A673 (cell line): ENCODE measurements at regions of chr1 and their contacts with region 1.

Region 1: GRCh38 chr1:10779201-10779600 is 17.2 kb downstream of the CASZ1 start:
- DNase-seq: peak; percentile 66
- H3K4me3 ChIP-seq: no peak overlapping the region
- H3K27ac ChIP-seq: no peak overlapping the region
- H3K4me1 ChIP-seq: peaks cover 8% of the 10 kb centered on the region
- H3K27me3 ChIP-seq: no peaks in the 10 kb centered on the region
- CTCF ChIP-seq: no peak

Region 2: DNA sequence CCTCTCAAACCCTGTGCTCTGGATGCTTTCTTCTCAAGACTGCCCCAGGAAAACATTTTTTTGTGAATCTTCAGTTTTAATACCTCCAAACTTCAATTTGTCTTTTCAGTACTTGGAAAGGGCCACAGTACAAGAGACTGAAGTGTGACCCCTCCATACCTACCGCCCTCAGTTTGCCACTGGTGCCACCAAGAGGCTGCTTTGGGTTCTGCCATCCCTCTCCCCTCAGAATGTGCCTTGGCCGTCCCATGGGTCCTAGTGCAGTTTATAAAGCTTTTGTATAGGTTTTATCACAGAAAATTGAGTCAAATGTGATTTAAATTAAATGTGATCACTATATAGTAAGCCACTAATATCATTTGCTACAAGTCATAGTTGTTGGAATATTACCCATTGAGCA is 441.2 kb before region 1 on chr1:
- CTCF ChIA-PET with region 1: no interaction called
- POLR2A ChIA-PET with region 1: no interaction called
- intact Hi-C with region 1: no loop called
- DNase-seq: peak; percentile 59
- H3K4me3 ChIP-seq: no peak overlapping the region
- H3K27ac ChIP-seq: no peak overlapping the region
- H3K4me1 ChIP-seq: no peaks in the 10 kb centered on the region
- H3K27me3 ChIP-seq: no peaks in the 10 kb centered on the region
- CTCF ChIP-seq: peak; percentile 83

Region 3: GRCh38 chr1:10431070-10431730 is 348.0 kb before region 1 on chr1:
- CTCF ChIA-PET with region 1: no interaction called
- POLR2A ChIA-PET with region 1: no interaction called
- intact Hi-C with region 1: no loop called
- DNase-seq: peak; percentile 37
- H3K4me3 ChIP-seq: peak overlapping the region; percentile 90
- H3K27ac ChIP-seq: peak overlapping the region; percentile 90
- H3K4me1 ChIP-seq: peaks cover 5% of the 10 kb centered on the region
- H3K27me3 ChIP-seq: no peaks in the 10 kb centered on the region
- CTCF ChIP-seq: no peak

Region 4: DNA sequence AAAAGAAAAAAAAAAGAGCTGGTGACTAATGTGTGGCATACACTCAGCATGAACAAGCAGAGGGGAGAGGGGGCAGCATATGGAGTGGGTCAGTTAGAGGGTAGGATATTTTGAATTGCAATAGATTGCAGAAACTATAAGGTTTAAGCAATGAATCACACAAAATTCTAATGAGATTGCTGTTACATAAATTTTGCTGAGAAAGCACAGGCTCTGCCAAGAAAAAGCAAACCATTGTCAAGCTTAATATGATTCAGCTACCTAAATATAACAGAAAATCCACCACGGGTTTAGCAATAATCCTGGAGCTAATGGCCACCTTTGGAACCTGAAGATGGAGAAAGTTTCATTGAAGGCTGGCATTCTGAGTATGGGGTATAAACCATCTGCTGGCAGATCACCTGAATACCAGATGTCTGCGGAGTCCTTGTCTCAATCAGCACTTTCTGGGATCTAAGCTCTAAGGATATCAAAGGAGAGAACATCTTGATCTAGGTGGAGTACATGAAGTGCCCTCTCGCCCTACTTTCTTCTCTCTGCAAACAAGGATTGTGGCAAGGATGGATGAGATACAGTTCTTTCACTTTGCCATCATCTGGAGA is 379.6 kb after region 1 on chr1:
- CTCF ChIA-PET with region 1: no interaction called
- POLR2A ChIA-PET with region 1: interaction called, 10 read pairs
- intact Hi-C with region 1: no loop called
- DNase-seq: peak; percentile 21
- H3K4me3 ChIP-seq: no peak overlapping the region
- H3K27ac ChIP-seq: no peak overlapping the region
- H3K4me1 ChIP-seq: no peaks in the 10 kb centered on the region
- H3K27me3 ChIP-seq: no peaks in the 10 kb centered on the region
- CTCF ChIP-seq: no peak